Esophagus muscularis mucosa (tissue), 4 donors: ENCODE measurements at regions of chr10 and their contacts with region 1.

Region 1: GRCh38 chr10:72215652-72216549 is at the starts of genes ANAPC16 and ASCC1:
- DNase-seq: peak; percentile 97
- H3K4me3 ChIP-seq: peak within 1 kb of the TSS; percentile 64 to 76 (median 71)
- H3K27ac ChIP-seq: peak within 1 kb of the TSS; percentile 89 to 98 (median 94)
- H3K4me1 ChIP-seq: peaks cover 41 to 64% (median 59%) of the 10 kb centered on the region in 4 donors
- H3K27me3 ChIP-seq: no peaks in the 10 kb centered on the region
- CTCF ChIP-seq: peak in 1 of 3 experiments; percentile 10
- EP300 ChIP-seq: no peak
- POLR2A ChIP-seq: peak; percentile 90
- total RNA-seq, gene ANAPC16: 106 to 157 (median 143) TPM
- total RNA-seq, gene ASCC1: 23.5 to 37.8 (median 29.8) TPM

Region 2: GRCh38 chr10:72254813-72255568 is 39.1 kb after region 1 on chr10:
- intact Hi-C with region 1: loop called (anchors 5 kb)
- DNase-seq: peak; percentile 97
- H3K4me3 ChIP-seq: peak overlapping the region in 3 of 4 donors; percentile 14 to 31 (median 15)
- H3K27ac ChIP-seq: peak overlapping the region; percentile 93 to 97 (median 94)
- H3K4me1 ChIP-seq: peaks cover 87 to 99% (median 95%) of the 10 kb centered on the region in 4 donors
- H3K27me3 ChIP-seq: no peaks in the 10 kb centered on the region
- CTCF ChIP-seq: no peak
- EP300 ChIP-seq: peak; percentile 95
- POLR2A ChIP-seq: no peak

Region 3: DNA sequence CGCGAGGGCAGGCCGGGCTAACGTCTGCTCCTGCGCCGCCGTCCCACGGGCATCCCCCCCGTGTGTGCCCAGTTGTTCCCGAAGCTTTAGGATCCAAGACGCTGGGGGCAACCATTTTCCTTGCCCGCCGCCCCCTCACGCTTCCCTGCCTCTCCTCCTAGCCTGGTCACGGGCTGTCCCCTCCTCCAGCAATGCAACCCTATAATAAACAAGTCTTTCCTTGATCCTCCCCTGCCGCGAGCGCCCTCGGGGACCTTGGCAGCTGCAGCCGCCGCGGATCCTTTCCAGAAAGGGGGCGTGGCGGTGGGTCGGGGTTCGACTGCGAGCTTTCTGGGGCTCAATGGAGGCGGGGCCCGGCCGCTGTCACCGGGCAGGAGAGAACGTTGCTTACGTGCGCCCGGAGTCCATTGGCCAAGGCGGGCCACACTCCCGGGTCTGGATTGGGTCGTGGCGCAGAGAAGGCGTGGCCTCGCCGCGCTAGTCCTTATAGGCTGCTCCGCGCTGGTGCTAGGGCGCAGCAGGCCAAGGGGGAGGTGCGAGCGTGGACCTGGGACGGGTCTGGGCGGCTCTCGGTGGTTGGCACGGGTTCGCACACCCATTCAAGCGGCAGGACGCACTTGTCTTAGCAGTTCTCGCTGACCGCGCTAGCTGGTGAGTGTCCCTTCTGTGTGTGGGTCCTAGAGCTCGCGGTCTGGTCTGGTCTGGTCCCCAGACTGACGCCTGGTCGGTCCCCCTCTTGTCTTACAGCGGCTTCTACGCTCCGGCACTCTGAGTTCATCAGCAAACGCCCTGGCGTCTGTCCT is 57.7 kb after region 1 on chr10 and contains the start of gene DDIT4:
- intact Hi-C with region 1: loop called (anchors 5 kb)
- DNase-seq: peak; percentile 100
- H3K4me3 ChIP-seq: peak within 1 kb of the TSS; percentile 65 to 95 (median 86)
- H3K27ac ChIP-seq: peak within 1 kb of the TSS; percentile 98 to 100 (median 99)
- H3K4me1 ChIP-seq: peaks cover 27 to 47% (median 37%) of the 10 kb centered on the region in 4 donors
- H3K27me3 ChIP-seq: no peaks in the 10 kb centered on the region
- CTCF ChIP-seq: no peak
- EP300 ChIP-seq: no peak
- POLR2A ChIP-seq: peak; percentile 99
- total RNA-seq, gene DDIT4: 77.4 to 247 (median 146) TPM

Region 4: GRCh38 chr10:72449915-72450441 is 234.1 kb after region 1 on chr10:
- intact Hi-C with region 1: no loop called
- DNase-seq: no peak
- H3K4me3 ChIP-seq: no peak overlapping the region
- H3K27ac ChIP-seq: no peak overlapping the region
- H3K4me1 ChIP-seq: no peaks in the 10 kb centered on the region
- H3K27me3 ChIP-seq: no peaks in the 10 kb centered on the region
- CTCF ChIP-seq: no peak
- EP300 ChIP-seq: no peak
- POLR2A ChIP-seq: no peak